A673 (cell line): ENCODE measurements at regions of chr6 and their contacts with region 1.

Region 1: GRCh38 chr6:37691904-37692806 is 5.5 kb downstream of the MDGA1 start:
- DNase-seq: peak; percentile 77
- H3K4me3 ChIP-seq: no peak overlapping the region
- H3K27ac ChIP-seq: no peak overlapping the region
- H3K4me1 ChIP-seq: peaks cover 10% of the 10 kb centered on the region
- H3K27me3 ChIP-seq: peaks cover 41% of the 10 kb centered on the region
- CTCF ChIP-seq: peak; percentile 97

Region 2: DNA sequence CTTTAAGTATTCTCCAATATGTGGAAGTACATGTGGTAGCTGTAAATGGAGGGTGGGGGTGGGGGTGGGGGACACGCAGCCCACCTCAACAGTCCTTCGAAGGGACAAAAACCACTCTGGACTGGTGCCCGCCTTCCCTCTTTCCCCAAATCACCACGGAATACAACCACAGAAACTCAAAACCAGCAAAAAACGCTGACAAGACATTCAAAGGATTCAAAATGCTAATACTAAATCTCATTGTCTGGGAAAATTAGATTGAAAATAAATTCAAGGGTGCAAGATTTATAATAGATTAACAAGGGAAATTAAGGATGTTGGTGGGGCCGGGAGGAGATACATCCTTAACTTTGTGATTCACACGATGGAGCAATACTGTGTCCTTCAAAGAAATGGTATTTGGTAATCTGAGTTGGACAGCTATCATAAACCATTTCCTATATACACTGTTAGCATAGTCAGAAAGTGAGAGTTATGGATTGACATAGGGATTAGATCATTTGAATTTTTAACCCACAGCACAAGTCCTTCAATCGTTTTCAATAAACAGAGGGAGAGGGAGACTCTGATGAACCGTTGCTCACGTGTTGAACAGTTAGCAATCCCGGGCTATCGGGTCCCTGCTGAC is 435.3 kb before region 1 on chr6:
- CTCF ChIA-PET with region 1: no interaction called
- POLR2A ChIA-PET with region 1: no interaction called
- intact Hi-C with region 1: no loop called
- DNase-seq: no peak
- H3K4me3 ChIP-seq: peak overlapping the region; percentile 93
- H3K27ac ChIP-seq: no peak overlapping the region
- H3K4me1 ChIP-seq: peaks cover 16% of the 10 kb centered on the region
- H3K27me3 ChIP-seq: no peaks in the 10 kb centered on the region
- CTCF ChIP-seq: no peak

Region 3: DNA sequence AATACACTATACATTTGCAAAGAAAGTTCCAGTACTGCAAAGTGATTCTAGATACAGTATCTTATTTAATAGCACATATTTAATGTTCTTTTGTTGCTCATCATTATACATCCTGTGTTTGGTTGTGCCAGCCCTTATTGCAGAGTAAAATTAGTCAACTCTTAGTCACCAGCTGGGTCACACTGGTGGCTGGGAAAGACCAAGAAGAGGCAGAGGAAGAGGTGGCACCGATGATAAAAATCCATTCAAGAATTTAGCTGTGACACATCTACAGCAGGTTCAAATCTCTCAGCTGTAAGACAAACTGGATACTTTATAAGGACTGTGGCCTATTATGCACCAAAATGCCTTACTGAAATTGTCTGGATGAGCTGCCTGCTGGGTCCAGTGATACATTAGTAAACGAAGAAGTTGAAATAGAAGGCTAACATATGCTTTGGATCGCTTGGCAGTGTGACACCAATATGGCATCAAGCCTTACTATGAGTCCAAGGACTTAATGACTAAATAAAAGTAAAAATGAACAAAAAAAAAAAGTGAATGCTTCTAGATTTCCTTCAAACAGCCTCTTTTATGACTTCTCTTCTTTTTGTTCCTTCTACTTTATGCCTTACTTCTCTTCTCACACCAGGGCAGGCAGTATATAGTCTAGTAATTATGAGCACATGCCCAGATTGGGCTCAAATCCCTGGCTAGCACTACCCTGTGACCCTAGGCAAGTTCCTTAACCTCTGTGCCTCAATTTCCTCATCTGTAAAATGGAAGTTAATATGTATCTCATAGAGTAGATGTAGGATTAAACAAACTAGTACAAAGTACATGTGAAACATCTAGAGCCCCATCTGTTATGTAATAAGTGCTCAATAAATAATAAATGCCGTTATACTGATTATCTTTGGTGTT is 367.8 kb before region 1 on chr6:
- CTCF ChIA-PET with region 1: no interaction called
- POLR2A ChIA-PET with region 1: no interaction called
- intact Hi-C with region 1: loop called (anchors 5 kb)
- DNase-seq: no peak
- H3K4me3 ChIP-seq: no peak overlapping the region
- H3K27ac ChIP-seq: no peak overlapping the region
- H3K4me1 ChIP-seq: peaks cover 10% of the 10 kb centered on the region
- H3K27me3 ChIP-seq: no peaks in the 10 kb centered on the region
- CTCF ChIP-seq: no peak

Region 4: GRCh38 chr6:37381579-37381978 is 310.6 kb before region 1 on chr6:
- CTCF ChIA-PET with region 1: no interaction called
- POLR2A ChIA-PET with region 1: no interaction called
- intact Hi-C with region 1: loop called (anchors 2 kb)
- DNase-seq: peak; percentile 51
- H3K4me3 ChIP-seq: no peak overlapping the region
- H3K27ac ChIP-seq: no peak overlapping the region
- H3K4me1 ChIP-seq: no peaks in the 10 kb centered on the region
- H3K27me3 ChIP-seq: no peaks in the 10 kb centered on the region
- CTCF ChIP-seq: peak; percentile 65

Region 5: DNA sequence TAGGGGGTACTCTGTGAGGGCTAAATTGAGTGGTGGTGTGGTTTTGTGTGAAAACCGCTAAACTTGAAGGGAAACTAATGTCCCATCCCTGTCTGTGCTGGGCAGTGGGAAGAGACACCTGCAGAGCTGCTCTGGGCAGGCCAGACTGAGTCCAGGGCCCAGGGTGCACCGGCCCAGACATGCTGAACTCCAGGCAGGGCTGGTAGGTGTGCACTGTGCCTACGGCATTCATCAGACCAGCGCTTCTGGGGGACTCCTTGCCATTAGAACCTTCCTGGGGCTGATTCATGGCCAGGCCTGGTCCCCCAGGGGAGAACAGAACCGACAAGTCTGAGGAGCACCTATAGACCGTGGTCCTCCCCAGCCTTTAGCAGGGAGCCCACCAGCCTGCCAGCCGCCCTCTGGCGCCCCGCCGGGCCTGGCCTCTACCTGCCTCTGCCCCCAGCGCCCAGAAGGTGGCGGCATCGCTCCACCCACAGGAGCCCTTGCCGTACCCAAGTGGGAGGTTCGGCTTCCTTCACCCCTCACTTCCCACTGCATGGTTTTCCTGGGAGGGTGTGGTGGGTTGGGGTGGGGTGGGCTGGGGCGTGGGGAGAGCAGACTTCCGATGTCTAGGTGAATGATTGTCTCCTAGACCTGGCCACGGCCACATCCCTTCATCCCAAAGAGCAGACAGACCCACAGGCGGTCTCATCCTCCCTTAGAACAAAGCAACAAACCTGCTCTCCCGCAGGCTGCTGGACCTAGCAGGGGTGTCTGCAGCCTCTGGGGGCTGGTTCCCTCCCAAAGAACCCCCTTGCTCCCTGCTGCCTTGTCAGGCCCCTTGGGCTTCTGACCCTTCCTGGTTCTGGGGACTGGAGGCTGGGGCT is 208.0 kb before region 1 on chr6:
- CTCF ChIA-PET with region 1: no interaction called
- POLR2A ChIA-PET with region 1: no interaction called
- intact Hi-C with region 1: loop called (anchors 2 kb)
- DNase-seq: peak; percentile 62
- H3K4me3 ChIP-seq: no peak overlapping the region
- H3K27ac ChIP-seq: no peak overlapping the region
- H3K4me1 ChIP-seq: peaks cover 4% of the 10 kb centered on the region
- H3K27me3 ChIP-seq: no peaks in the 10 kb centered on the region
- CTCF ChIP-seq: peak; percentile 81

Region 6: DNA sequence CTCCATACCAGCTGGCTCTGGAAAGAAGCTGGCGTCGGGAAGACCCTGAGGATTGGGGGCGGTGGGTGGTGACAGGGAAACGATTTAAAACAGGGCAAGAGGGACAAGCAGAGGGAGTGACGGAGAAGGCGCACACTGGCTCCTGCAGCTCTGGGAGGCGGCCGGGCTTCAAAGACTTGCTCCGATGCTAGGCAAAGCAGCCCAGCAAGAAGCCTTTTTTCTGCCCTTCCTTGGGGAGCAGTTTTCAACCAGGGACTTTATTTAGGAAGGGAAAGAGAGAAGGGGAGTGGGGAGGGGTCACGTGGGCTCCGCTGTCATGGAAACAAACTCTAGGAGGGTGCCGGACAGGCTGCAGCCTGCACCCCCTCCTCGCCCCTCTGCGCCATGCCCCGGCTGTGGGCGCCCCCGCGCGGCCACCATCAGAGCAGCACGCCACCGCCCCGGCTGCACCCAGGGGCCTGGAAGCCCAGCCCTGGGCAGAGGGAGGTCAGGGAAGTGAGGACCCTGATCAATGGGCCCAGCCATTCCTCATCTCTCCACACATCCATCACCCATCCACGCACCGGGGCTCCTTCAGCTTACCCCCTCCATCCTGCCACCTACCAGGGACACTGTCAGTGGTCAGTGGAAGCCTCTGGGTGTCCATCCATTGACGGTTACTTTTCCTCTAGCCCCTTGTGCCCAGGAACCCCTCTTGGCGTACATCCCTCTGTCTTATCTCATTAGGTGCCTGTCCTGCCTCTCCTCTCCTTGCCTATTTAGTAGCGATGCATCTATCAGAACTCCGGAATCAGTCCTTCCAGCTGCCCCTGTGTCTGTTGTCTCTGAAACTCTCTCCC is 125.8 kb before region 1 on chr6:
- CTCF ChIA-PET with region 1: no interaction called
- POLR2A ChIA-PET with region 1: no interaction called
- intact Hi-C with region 1: loop called (anchors 5 kb)
- DNase-seq: peak; percentile 54
- H3K4me3 ChIP-seq: peak overlapping the region; percentile 38
- H3K27ac ChIP-seq: no peak overlapping the region
- H3K4me1 ChIP-seq: peaks cover 9% of the 10 kb centered on the region
- H3K27me3 ChIP-seq: peaks cover 3% of the 10 kb centered on the region
- CTCF ChIP-seq: peak; percentile 94

Region 7: GRCh38 chr6:37615564-37616340 is 76.4 kb before region 1 on chr6:
- CTCF ChIA-PET with region 1: interaction called, 4 read pairs
- POLR2A ChIA-PET with region 1: no interaction called
- intact Hi-C with region 1: loop called (anchors 5 kb)
- DNase-seq: peak; percentile 77
- H3K4me3 ChIP-seq: no peak overlapping the region
- H3K27ac ChIP-seq: no peak overlapping the region
- H3K4me1 ChIP-seq: peaks cover 48% of the 10 kb centered on the region
- H3K27me3 ChIP-seq: no peaks in the 10 kb centered on the region
- CTCF ChIP-seq: no peak

Region 8: GRCh38 chr6:38155144-38155543 is 463.0 kb after region 1 on chr6:
- CTCF ChIA-PET with region 1: no interaction called
- POLR2A ChIA-PET with region 1: no interaction called
- intact Hi-C with region 1: no loop called
- DNase-seq: no peak
- H3K4me3 ChIP-seq: no peak overlapping the region
- H3K27ac ChIP-seq: peak overlapping the region; percentile 30
- H3K4me1 ChIP-seq: peaks cover 10% of the 10 kb centered on the region
- H3K27me3 ChIP-seq: no peaks in the 10 kb centered on the region
- CTCF ChIP-seq: no peak